GM10248 (cell line): ENCODE measurements at regions of chr15 and their contacts with region 1.

Region 1: DNA sequence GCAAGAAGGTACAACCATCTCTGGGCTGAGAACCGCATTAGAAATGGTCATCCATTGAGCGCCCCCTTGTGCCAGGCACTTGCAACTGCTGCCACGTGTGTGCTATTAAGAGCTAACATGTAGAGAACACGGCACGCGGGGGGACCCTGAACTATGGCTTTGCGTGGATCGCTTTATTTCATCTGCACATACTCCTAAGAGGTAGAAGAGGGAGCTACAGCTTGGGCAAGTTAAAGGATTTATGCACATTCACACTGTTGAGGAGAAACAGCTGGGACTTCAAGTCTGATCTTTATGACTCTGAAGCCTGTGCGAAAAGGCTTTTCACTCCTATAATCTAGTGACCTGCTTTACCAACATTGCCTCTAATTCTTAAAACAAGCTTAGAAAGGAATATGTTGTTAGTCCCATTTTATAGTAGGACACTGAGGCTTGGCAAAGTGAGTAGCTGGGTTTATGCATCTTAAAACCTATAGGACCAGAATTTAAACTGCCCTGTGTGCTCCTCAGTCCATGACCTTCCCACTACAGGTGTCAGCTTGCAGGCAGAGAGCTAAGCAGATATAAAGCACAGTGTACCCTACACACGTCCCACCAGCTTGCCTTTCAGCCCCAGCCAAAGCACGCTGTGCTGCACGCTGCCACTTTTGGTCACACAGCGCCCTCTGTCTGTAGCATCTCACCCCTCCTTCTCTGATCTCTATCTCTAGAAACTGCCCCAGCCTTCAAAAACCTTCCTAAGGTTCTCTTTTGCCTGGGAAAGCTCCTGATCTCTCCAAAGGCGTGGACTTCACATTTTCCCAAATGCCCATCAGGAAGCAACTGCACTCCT is 57.8 kb downstream of the STARD5 start:
- DNase-seq: peak; percentile 79
- CTCF ChIP-seq: peak; percentile 97

Region 2: DNA sequence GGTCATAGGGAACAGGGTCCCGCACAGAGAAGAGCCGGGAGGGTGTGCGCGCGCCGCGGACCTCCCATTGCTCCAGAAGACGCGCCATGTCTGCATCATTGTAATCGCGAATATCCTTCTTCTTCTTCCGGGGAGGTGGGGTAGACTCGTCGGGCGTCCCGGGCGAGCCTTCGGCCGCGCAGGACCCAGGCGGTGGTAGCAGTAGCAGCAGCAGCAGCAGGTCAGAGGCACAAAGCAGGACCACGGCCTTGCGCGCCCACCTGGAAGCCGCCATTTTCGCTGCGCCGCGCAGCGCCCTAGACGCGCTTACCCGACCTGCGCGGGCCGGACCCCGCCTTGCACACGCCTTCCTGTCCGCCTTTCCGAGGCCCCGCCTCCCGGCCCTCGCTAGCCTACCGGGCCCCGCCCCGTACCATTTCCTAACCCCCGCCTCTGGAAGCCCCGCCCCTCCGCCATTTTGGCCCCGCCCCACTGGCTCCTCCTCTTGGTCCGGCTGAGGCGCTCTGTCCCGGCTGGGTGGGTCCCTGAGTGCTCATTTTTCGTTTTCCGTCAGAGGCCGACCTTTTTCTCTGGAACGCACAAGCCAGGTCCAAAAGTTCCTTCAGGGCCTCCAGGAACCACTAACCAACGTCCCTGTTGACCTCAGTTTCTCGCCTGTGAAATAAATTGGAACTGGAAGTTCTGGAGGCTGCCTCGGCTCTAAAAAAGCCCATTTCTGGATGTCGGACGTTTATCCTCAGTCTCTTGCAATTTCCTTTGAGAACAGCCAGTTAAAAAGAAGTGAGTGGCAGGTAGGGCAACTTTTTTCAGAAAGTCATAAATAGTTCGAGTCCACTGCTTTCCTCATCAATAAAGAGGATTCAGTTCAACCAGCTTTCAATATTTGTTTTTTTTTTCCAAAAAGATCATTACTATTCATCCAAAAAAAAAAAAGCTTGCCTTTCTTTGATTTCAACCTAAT is 276.4 kb before region 1 on chr15 and contains the start of gene MESD:
- CTCF ChIA-PET with region 1: interaction called, 16 read pairs
- POLR2A ChIA-PET with region 1: no interaction called
- DNase-seq: peak; percentile 99
- CTCF ChIP-seq: no peak

Region 3: GRCh38 chr15:81117136-81117535 is 149.0 kb before region 1 on chr15:
- CTCF ChIA-PET with region 1: interaction called, 455 read pairs
- POLR2A ChIA-PET with region 1: no interaction called
- DNase-seq: no peak
- CTCF ChIP-seq: no peak

Region 4: DNA sequence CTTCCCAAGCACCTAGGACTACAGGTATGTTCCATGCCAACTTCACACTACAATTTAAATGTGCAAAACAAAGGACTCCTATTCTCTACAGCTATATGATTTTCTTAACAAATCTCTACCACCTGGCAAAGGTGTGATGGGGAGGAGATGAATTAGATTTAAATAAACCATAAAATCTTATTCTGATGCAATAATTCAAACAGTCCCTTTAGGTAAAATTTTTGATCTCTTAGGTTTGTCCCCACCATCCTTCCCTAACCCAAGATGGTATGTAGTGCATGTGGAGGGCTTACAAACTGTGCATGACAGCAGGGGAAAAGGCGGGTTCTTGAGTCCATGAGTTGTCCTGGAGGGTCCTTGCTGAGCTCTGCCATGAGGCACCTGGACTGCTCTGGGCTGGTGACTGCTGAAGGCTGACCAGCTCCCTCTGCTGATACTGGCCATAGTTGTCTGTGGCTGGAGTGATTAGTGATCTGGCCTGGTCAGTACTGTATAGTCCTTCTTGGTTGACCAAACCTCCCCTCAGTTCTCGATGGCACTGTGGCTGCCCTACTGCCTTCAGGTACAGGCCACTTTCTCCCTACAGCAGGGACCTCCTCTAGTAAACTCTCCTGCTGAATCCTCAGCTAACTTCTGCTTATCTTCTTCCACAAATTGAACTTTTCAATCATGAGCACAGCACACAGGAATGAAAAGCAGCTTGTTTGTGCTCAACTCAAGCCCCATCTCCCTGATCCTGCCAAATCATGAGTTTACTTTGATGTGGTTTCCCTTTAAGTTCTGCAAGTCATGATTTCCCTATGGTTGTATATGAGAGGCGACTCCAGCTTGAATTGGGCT is 102.0 kb before region 1 on chr15:
- CTCF ChIA-PET with region 1: interaction called, 215 read pairs
- POLR2A ChIA-PET with region 1: no interaction called
- DNase-seq: no peak
- CTCF ChIP-seq: no peak

Region 5: GRCh38 chr15:81286621-81287121 is 20.5 kb after region 1 on chr15:
- CTCF ChIA-PET with region 1: interaction called, 73 read pairs
- POLR2A ChIA-PET with region 1: no interaction called
- DNase-seq: no peak
- CTCF ChIP-seq: no peak

Region 6: GRCh38 chr15:81336568-81336967 is 70.4 kb after region 1 on chr15:
- CTCF ChIA-PET with region 1: interaction called, 82 read pairs
- POLR2A ChIA-PET with region 1: no interaction called
- DNase-seq: peak; percentile 47
- CTCF ChIP-seq: peak; percentile 45

Region 7: GRCh38 chr15:81504170-81504905 is 238.2 kb after region 1 on chr15:
- CTCF ChIA-PET with region 1: no interaction called
- POLR2A ChIA-PET with region 1: no interaction called
- DNase-seq: no peak
- CTCF ChIP-seq: no peak